PC-9 (cell line): ENCODE measurements at regions of chr12 and their contacts with region 1.

Region 1: DNA sequence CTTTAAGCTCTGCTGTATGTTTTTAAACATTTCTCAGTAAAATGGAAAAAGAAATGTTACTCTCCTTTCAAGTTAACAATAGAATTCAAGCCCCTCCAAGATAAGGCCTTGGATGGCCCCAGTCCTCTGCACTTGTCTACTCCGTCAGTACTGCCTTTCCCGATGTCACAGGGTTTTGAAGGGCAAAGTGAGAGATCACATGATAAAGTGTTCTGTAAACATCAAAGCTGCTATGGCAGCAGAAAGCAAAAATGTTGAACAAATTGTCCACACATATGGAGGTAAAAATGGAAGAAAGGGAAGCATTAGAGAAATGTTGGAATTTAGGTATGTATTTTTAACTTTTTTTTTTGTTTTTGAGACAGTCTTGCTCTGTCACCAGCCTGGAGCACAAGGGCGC is 33.5 kb upstream of the CDK2AP1 start:
- DNase-seq: no peak
- H3K4me3 ChIP-seq: no peak overlapping the region
- H3K27ac ChIP-seq: no peak overlapping the region
- H3K4me1 ChIP-seq: no peaks in the 10 kb centered on the region
- H3K27me3 ChIP-seq: no peaks in the 10 kb centered on the region
- CTCF ChIP-seq: no peak

Region 2: GRCh38 chr12:122726080-122726558 is 579.0 kb before region 1 on chr12:
- CTCF ChIA-PET with region 1: interaction called, 10 read pairs
- POLR2A ChIA-PET with region 1: no interaction called
- intact Hi-C with region 1: no loop called
- DNase-seq: peak; percentile 65 to 90
- H3K4me3 ChIP-seq: peak overlapping the region; percentile 77
- H3K27ac ChIP-seq: peak overlapping the region; percentile 84
- H3K4me1 ChIP-seq: peaks cover 34% of the 10 kb centered on the region
- H3K27me3 ChIP-seq: no peaks in the 10 kb centered on the region
- CTCF ChIP-seq: no peak

Region 3: GRCh38 chr12:123457980-123458783 is 153.0 kb after region 1 on chr12 and contains the start of gene SNRNP35:
- CTCF ChIA-PET with region 1: no interaction called
- POLR2A ChIA-PET with region 1: no interaction called
- intact Hi-C with region 1: no loop called
- DNase-seq: peak; percentile 56 to 78
- H3K4me3 ChIP-seq: peak within 1 kb of the TSS; percentile 89
- H3K27ac ChIP-seq: peak within 1 kb of the TSS; percentile 99
- H3K4me1 ChIP-seq: 0 out of 2 replicates have a peak, but pooled peaks cover 6% of the 10 kb centered on the region
- H3K27me3 ChIP-seq: no peaks in the 10 kb centered on the region
- CTCF ChIP-seq: no peak
- total RNA-seq, gene SNRNP35: 24.3 and 28.6 TPM in 2 replicates